Vagina (tissue), 2 donors: ENCODE measurements at regions of chr6 and their contacts with region 1.

Region 1: GRCh38 chr6:593139-593906 is 63.6 kb downstream of the HUS1B start:
- DNase-seq: no peak
- H3K4me3 ChIP-seq: no peak overlapping the region
- H3K27ac ChIP-seq: no peak overlapping the region
- H3K4me1 ChIP-seq: no peaks in the 10 kb centered on the region
- H3K27me3 ChIP-seq: no peaks in the 10 kb centered on the region
- CTCF ChIP-seq: peak in 2 of 3 experiments; percentile 59 to 65
- POLR2A ChIP-seq: no peak

Region 2: GRCh38 chr6:1396952-1397868 is 803.9 kb after region 1 on chr6:
- intact Hi-C with region 1: loop called (anchors 10 kb)
- DNase-seq: no peak
- H3K4me3 ChIP-seq: no peak overlapping the region
- H3K27ac ChIP-seq: no peak overlapping the region
- H3K4me1 ChIP-seq: peaks cover 15% of the 10 kb centered on the region
- H3K27me3 ChIP-seq: peaks cover 14% of the 10 kb centered on the region
- CTCF ChIP-seq: peak; percentile 72 to 95 (median 78)
- POLR2A ChIP-seq: no peak